Common myeloid progenitor, CD34-positive (primary cell): ENCODE measurements at regions of chr1 and their contacts with region 1.

Region 1: DNA sequence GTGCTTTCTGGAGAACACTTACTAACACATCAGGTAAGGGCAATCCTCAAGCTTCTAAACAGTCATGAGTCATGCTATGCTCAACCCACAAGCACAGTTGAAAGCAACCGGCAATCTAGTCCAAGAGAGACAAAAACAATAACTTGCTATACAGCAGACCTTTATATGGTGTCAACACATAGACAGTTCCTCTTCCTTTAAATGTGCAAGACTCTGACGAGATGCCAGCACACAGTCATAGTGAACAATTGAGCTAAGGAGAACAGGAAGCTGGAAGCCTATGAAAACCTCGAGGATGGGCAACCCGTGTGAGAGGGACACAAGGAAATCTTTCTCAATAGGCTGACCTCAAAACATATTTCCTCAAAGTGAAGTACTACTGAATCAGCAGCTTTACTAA is 5.3 kb downstream of the ADIPOR1 start:
- DNase-seq: peak; percentile 40 to 87 (median 83)
- H3K4me3 ChIP-seq: peak overlapping the region in 3 of 7 experiments; percentile 8 to 23 (median 16)
- H3K27ac ChIP-seq: peak overlapping the region; percentile 41 to 52
- H3K4me1 ChIP-seq: peaks cover 29 to 42% (median 35%) of the 10 kb centered on the region in 4 experiments
- H3K27me3 ChIP-seq: no peaks in the 10 kb centered on the region

Region 2: DNA sequence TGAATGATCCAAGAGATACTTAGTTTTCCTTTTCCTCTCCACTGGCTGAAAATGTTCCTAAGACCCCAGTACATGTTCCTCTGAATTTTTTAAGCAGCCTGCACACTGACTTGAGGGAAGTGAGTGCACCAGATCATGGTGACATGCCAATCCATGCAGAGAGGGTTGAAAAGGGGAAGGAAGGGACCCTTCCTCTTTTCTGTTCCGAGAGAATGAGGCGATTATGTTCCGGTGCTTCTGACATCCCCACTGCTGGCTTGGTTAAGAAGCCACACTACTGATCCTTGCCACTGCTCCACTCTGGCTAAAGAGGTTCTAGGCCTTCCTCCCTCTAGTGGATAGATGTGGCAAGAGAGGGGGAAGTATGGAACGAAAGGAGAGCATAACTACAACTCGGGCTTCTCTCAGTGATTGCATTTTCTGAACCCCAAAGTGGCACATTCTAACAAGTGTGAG is 16.1 kb after region 1 on chr1:
- CTCF ChIA-PET with region 1: interaction called, 10 read pairs
- POLR2A ChIA-PET with region 1: interaction called, 3 read pairs
- DNase-seq: peak; percentile 96 to 99 (median 99)
- H3K4me3 ChIP-seq: peak overlapping the region in 6 of 7 experiments; percentile 31 to 90 (median 76)
- H3K27ac ChIP-seq: peak overlapping the region in 1 of 2 experiments; percentile 82
- H3K4me1 ChIP-seq: peaks cover 16 to 38% (median 35%) of the 10 kb centered on the region in 4 experiments
- H3K27me3 ChIP-seq: no peaks in the 10 kb centered on the region

Region 3: DNA sequence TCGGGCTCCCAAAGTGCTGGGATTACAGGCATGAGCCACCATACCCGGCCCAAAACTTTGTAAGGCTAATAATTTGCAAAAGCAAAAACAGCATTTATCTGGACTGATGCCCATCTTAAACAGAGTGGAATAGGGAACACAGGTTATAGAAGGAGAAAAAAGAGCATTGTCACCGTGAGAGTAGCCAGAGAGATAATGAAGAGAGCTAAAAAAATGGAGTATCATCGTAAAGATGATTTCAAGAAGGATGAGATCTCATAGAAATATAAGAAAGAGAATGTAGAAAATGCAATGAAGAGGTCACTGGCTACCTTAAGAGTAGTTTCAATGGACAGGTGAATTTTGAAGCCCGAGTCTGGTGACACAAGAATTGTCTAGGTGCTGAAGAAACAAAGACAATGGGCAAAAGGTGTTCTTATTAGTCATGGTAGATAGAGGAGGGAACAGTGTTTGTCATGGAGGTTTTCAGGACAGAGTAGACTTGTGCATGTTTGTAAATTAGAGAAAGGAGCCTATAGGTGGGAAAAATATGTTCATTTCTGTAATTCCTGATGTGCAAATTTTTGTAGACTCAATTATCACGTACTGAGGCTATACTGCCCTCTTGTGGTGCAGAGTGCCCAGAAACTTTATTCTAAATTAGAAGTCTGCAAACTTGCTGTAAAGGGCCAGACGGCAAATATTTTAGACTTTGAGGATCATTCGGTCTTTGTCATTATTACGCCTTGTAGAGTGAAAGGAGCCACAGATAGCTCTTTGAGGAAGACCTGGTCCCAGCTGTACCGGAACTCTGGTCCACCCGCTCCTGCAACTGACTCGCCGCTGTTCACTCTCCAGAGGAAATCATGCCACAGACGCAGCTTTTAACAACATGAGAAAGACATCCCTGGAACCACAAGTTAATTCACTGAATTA is 46.3 kb after region 1 on chr1:
- CTCF ChIA-PET with region 1: interaction called, 18 read pairs
- POLR2A ChIA-PET with region 1: no interaction called
- DNase-seq: peak; percentile 74 to 88 (median 85)
- H3K4me3 ChIP-seq: peak overlapping the region in 6 of 7 experiments; percentile 37 to 68 (median 50)
- H3K27ac ChIP-seq: peak overlapping the region in 1 of 2 experiments; percentile 49
- H3K4me1 ChIP-seq: peaks cover 4 to 16% (median 10%) of the 10 kb centered on the region in 4 experiments
- H3K27me3 ChIP-seq: no peaks in the 10 kb centered on the region

Region 4: DNA sequence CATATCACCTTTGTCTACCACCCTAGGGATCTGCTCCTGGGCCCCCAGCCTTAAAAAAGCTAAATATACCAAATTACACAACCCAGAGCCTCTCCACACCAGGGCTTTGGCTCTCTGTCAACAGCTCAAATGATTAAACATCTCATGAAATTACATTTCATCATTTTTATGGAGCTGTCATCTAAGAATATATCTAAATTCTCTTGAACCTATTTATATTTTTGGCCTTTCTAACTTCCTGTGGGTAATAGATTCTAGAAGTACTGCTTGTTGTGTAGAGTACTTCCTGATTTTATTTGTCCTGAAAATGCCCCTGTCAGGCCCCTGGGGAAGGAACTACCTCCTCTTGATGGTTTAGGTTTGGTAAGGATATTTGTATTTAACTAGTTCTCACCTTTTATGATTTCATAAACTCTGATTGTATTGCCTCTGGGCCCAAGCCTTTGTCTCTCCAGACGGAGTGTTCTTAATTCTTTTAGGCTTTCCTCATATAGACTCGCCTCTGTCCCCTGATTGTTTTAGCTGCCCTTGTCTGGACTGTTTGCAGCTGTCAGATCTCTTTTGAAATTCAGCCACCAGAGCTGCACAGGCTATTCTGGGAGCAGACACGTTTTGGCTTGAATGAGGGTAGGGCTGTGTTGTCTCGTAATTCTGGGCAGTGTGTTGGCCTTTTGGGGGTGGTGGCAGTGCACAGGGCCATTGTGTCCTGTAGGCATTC is 116.4 kb after region 1 on chr1:
- CTCF ChIA-PET with region 1: no interaction called
- POLR2A ChIA-PET with region 1: no interaction called
- DNase-seq: peak in 2 of 3 donors; percentile 54 to 55
- H3K4me3 ChIP-seq: no peak overlapping the region
- H3K27ac ChIP-seq: no peak overlapping the region
- H3K4me1 ChIP-seq: peaks cover 1 to 19% (median 15%) of the 10 kb centered on the region in 4 experiments
- H3K27me3 ChIP-seq: peaks cover 0 to 16% (median 0%) of the 10 kb centered on the region in 5 experiments